Cardiac septum (tissue), 1 donor: ENCODE measurements at regions of chr4 and their contacts with region 1.

Region 1: DNA sequence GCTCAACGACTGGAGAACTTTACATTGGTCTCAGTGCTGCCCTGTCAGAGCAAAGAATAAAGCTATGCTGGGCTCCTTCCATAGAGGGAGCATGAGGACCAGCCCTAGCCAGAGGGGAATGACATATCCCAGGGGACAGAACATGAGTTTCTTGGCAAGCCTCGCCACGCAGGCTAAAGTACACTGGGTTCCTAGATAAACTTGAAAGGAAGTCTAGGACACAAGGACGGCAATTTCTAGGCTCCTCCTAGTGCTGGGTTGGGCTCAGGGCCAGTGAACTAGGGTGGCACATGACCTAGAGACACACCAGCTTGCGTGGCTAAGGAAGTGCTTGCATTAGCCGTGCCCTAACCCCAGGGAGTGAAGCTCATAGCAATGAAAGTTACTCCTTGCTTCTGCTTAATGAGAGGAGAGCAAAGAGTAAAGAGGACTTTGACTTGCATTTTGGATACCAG is 141.0 kb downstream of the MAB21L2 start:
- DNase-seq: peak; percentile 85

Region 2: DNA sequence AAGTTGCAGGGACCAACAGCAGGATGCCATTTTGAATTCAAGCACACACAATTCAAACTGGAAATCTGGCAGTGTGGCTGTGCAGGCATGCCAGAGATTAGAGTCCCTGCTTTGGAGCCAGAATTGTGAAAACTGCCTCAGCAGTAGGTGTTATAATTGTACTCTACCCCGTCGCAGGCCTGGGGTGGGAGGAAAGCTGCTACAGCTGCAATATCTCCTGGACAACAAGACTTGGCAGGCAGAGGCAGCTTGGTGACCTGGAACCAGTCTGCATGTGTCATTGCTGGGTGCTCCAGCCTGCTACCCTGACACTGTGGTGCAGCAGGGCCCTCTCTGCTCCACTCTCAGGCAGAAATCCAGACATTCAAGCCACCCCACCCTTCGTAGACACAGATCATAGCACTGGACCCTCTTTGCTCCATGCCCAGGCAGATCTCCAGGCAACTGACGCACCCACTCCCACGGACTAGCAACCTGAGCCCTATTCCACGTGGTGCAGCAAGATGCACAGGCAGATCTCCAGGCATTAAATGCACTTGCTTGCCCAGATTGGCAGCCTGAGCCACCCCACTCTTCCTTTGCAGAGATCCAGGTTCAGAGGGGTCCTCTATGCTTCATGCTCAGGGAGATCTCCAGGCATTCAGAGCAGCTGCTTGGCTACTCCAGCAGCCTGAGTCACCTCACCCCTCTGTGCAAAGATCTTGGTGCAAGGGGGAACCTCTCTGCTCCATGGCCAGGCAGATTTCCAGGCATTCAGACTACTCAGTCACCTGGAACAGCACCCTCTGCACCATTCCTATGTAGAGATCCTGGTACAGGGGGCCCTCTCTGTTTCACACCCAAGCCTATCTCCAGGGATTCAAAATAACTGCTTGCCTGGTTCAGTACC is 151.6 kb after region 1 on chr4:
- intact Hi-C with region 1: loop called (anchors 5 kb)
- DNase-seq: peak; percentile 80

Region 3: GRCh38 chr4:150950657-150951288 is 227.8 kb after region 1 on chr4:
- intact Hi-C with region 1: loop called (anchors 10 kb)
- DNase-seq: no peak